B cell (primary cell): ENCODE measurements at regions of chr19 and their contacts with region 1.

Region 1: GRCh38 chr19:47273313-47273977 is 1.2 kb upstream of the INAFM1 start:
- DNase-seq: peak; percentile 91
- ATAC-seq: peak; percentile 56
- H3K4me3 ChIP-seq: peak overlapping the region; percentile 54 to 99 (median 96)
- H3K4me3 Mint-ChIP-seq: peak overlapping the region; percentile 97
- H3K27ac ChIP-seq: peak overlapping the region; percentile 94 to 98
- H3K27ac Mint-ChIP-seq: peak overlapping the region; percentile 99
- H3K4me1 ChIP-seq: peaks cover 12 to 22% of the 10 kb centered on the region in 2 donors
- H3K4me1 Mint-ChIP-seq: peaks cover 22% of the 10 kb centered on the region
- H3K27me3 ChIP-seq: no peaks in the 10 kb centered on the region
- H3K27me3 Mint-ChIP-seq: no peaks in the 10 kb centered on the region
- CTCF ChIP-seq: no peak

Region 2: DNA sequence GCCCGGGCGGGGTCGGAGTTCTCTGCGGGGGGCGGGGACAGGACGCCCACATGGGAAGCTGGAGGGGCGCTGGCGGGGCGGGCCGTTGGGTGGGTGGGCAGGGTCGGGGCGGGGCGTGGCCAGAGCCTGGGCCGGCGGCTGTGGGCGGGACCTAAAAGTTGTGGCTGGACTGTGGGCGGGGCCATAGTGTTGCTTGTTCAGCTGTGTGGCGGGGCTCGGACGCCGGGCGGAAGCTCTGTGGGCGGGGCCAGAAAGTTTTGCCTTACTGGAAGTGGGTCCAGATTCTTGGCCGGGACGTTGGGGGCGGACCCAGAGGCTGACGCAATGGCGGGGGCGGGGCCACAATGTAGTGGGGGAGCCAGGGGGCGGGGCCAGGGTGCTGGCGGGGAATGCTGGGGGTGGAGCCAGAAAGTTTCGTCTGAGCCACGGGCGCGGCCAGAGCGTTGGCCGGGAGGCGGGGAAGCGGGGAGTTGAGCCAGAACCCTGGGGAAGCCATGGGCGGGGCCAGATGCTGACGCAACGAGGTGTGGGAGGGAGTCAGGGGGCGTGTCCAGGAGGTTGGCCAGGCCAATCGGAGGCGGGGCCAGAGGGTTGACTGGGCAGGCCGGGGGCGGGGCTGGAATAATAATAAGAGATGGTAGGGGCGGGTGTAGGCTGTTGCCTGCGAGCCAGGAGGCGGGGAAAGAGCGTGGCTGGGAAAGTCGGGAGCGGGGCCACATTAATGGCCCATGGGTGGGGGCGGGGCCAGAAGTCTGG is 16.6 kb before region 1 on chr19:
- CTCF ChIA-PET with region 1: interaction called, 22 read pairs
- POLR2A ChIA-PET with region 1: interaction called, 74 read pairs
- intact Hi-C with region 1: loop called (anchors 1 kb)
- DNase-seq: peak; percentile 98
- ATAC-seq: peak; percentile 77
- H3K4me3 ChIP-seq: peak overlapping the region; percentile 38 to 71 (median 62)
- H3K4me3 Mint-ChIP-seq: peak overlapping the region; percentile 92
- H3K27ac ChIP-seq: peak overlapping the region; percentile 73 to 94
- H3K27ac Mint-ChIP-seq: peak overlapping the region; percentile 95
- H3K4me1 ChIP-seq: peaks cover 14 to 20% of the 10 kb centered on the region in 2 donors
- H3K4me1 Mint-ChIP-seq: peaks cover 40% of the 10 kb centered on the region
- H3K27me3 ChIP-seq: no peaks in the 10 kb centered on the region
- H3K27me3 Mint-ChIP-seq: no peaks in the 10 kb centered on the region
- CTCF ChIP-seq: no peak

Region 3: GRCh38 chr19:47414469-47414868 is 141.0 kb after region 1 on chr19:
- CTCF ChIA-PET with region 1: no interaction called
- POLR2A ChIA-PET with region 1: no interaction called
- intact Hi-C with region 1: no loop called
- DNase-seq: no peak
- ATAC-seq: no peak
- H3K4me3 ChIP-seq: no peak overlapping the region
- H3K4me3 Mint-ChIP-seq: no peak overlapping the region
- H3K27ac ChIP-seq: no peak overlapping the region
- H3K27ac Mint-ChIP-seq: peak overlapping the region; percentile 20
- H3K4me1 ChIP-seq: peaks cover 10 to 17% of the 10 kb centered on the region in 2 donors
- H3K4me1 Mint-ChIP-seq: peaks cover 19% of the 10 kb centered on the region
- H3K27me3 ChIP-seq: peaks cover 0 to 36% (median 13%) of the 10 kb centered on the region in 4 experiments
- H3K27me3 Mint-ChIP-seq: peaks cover 49% of the 10 kb centered on the region
- CTCF ChIP-seq: no peak

Region 4: GRCh38 chr19:47600246-47601179 is 327.1 kb after region 1 on chr19:
- CTCF ChIA-PET with region 1: no interaction called
- POLR2A ChIA-PET with region 1: no interaction called
- intact Hi-C with region 1: loop called (anchors 10 kb)
- DNase-seq: peak; percentile 99
- ATAC-seq: peak; percentile 96
- H3K4me3 ChIP-seq: peak overlapping the region; percentile 63 to 79 (median 71)
- H3K4me3 Mint-ChIP-seq: peak overlapping the region; percentile 80
- H3K27ac ChIP-seq: peak overlapping the region; percentile 62 to 83
- H3K27ac Mint-ChIP-seq: peak overlapping the region; percentile 70
- H3K4me1 ChIP-seq: peaks cover 12 to 18% of the 10 kb centered on the region in 2 donors
- H3K4me1 Mint-ChIP-seq: peaks cover 11% of the 10 kb centered on the region
- H3K27me3 ChIP-seq: peaks cover 0 to 28% (median 3%) of the 10 kb centered on the region in 4 experiments
- H3K27me3 Mint-ChIP-seq: peaks cover 21% of the 10 kb centered on the region
- CTCF ChIP-seq: no peak